ENCODE measurements at regions of chr3 and their contacts with region 1.

Region 1: DNA sequence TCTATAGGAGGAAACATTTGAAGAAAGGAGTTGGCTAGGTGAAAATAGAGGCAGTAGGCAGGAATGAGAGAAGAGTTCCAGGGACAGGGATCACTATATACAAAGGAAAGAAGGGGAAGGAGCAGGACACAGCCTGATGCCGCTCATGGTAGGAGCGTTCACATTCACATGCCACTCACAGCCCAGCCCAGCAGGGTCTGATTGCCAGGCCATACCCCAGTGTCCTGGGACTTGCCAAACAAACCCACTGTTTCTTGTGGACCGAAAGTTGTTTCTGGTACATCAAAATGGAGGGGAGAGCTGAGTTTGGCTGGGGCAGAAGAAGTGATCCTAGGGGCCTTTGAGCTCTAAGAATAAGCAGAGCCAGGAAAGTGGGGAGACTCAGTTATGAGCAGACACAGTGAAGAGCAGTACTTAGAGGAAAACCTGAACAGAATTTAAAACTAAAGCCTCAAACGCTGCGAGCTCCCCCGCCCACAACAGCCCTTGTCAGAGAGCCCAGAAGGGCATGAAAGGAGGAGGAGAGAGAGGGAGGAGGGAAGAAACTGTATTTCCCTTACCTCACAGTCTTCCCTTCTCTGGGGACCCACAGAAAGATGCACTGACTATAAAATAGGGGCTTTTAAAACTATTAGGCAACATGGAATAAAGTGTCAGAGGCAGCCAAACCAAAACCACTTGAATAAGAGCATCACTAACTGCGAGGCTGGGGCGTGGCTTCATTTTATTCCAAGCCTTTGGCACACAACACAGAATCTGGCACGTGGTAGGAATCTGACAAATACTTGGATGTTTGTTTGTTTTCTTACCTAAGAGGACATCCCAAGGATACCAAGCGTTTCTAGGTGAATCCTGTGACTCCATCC is 129.0 kb downstream of the RPL22L1 start:
- DNase-seq: peak in 1 of 2 donors; percentile 75
- H3K4me3 ChIP-seq: peak overlapping the region in 1 of 2 donors; percentile 34
- H3K27ac ChIP-seq: peak overlapping the region; percentile 78 to 83
- H3K4me1 ChIP-seq: peaks cover 0 to 22% of the 10 kb centered on the region in 2 donors
- H3K27me3 ChIP-seq: no peaks in the 10 kb centered on the region
- CTCF ChIP-seq: no peak

Region 2: DNA sequence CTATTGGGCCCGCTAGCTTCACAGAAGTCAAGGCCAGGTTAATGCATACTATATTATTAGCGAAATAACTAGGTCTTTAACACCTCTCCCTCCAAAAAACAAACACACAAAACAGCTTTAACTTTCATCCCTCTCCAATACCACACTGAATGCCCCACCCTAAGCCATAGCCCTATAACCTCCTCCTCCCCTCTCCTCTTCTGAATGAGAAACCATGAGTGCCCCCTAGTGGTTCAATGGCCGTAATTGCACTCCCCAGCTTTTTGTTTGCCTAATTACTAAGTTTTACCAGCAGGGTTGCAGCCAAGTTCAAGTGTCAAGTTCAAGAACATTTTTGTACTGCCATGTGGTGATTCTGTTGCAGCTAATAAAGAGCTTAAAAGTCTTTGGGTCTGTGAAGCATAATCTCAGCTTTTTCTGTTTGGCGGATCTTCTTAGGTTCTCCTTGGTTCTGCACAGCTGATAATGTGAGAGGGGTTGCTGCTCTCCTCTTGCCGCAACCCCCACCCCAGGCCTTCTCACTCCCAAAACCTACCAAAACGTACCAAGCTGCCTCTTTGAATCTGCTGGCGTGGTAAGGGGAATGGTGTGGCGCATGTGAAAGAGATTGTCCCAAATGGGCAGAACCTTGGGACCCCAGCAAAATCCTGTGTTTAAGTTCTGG is 71.1 kb after region 1 on chr3:
- intact Hi-C with region 1: no loop called
- DNase-seq: peak in 1 of 2 donors; percentile 81
- H3K4me3 ChIP-seq: no peak overlapping the region
- H3K27ac ChIP-seq: no peak overlapping the region
- H3K4me1 ChIP-seq: peaks cover 0 to 3% of the 10 kb centered on the region in 2 donors
- H3K27me3 ChIP-seq: no peaks in the 10 kb centered on the region
- CTCF ChIP-seq: peak; percentile 79 to 93 (median 85)

Region 3: GRCh38 chr3:170908235-170909116 is 167.5 kb after region 1 on chr3 and contains the start of gene EIF5A2:
- intact Hi-C with region 1: loop called (anchors 5 kb)
- DNase-seq: peak; percentile 85 to 97
- H3K4me3 ChIP-seq: peak within 1 kb of the TSS; percentile 86 to 95
- H3K27ac ChIP-seq: peak within 1 kb of the TSS; percentile 79 to 85
- H3K4me1 ChIP-seq: peaks cover 0 to 6% of the 10 kb centered on the region in 2 donors
- H3K27me3 ChIP-seq: no peaks in the 10 kb centered on the region
- CTCF ChIP-seq: peak in 1 of 3 experiments; percentile 8
- total RNA-seq, gene EIF5A2: 28.6 TPM